Ovary (tissue), 10 donors: ENCODE measurements at regions of chr1 and their contacts with region 1.

Region 1: GRCh38 chr1:212477014-212477679 is 44.4 kb downstream of the NENF start:
- DNase-seq: peak; percentile 56 to 78 (median 71)
- H3K4me3 ChIP-seq: no peak overlapping the region
- H3K27ac ChIP-seq: no peak overlapping the region
- H3K4me1 ChIP-seq: no peaks in the 10 kb centered on the region
- H3K27me3 ChIP-seq: no peaks in the 10 kb centered on the region
- CTCF ChIP-seq: peak; percentile 57 to 64 (median 60)
- EP300 ChIP-seq: no peak
- POLR2A ChIP-seq: no peak

Region 2: GRCh38 chr1:212838145-212838544 is 361.0 kb after region 1 on chr1:
- intact Hi-C with region 1: no loop called
- DNase-seq: no peak
- H3K4me3 ChIP-seq: no peak overlapping the region
- H3K27ac ChIP-seq: no peak overlapping the region
- H3K4me1 ChIP-seq: no peaks in the 10 kb centered on the region
- H3K27me3 ChIP-seq: no peaks in the 10 kb centered on the region
- CTCF ChIP-seq: no peak
- EP300 ChIP-seq: no peak
- POLR2A ChIP-seq: no peak

Region 3: DNA sequence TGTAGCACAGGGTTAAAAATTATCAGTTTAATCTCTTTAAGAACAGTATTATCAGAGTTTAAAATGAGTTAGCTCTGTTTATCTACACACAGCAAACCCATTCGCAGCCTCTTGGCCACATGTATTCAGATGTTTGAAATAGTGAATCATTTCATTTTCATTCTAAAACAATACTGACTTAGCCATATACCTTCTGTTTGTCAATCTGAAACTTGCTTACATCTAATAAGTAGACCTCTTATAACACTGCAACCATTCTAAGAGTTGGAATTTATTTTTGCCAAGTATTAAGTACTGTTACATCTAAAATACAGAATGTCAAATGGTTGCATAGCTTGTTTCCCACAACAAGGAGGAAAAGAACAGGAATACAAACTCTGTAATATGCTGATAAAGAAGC is 513.1 kb after region 1 on chr1:
- intact Hi-C with region 1: loop called in 1 of 4 experiments (anchors 10 kb)
- DNase-seq: no peak
- H3K4me3 ChIP-seq: no peak overlapping the region
- H3K27ac ChIP-seq: no peak overlapping the region
- H3K4me1 ChIP-seq: no peaks in the 10 kb centered on the region
- H3K27me3 ChIP-seq: no peaks in the 10 kb centered on the region
- CTCF ChIP-seq: no peak
- EP300 ChIP-seq: no peak
- POLR2A ChIP-seq: no peak